Activated CD4-positive, alpha-beta T cell treated with anti-CD3 and anti-CD28 coated beads for 36 hours (primary cell): ENCODE measurements at regions of chr5 and their contacts with region 1.

Region 1: DNA sequence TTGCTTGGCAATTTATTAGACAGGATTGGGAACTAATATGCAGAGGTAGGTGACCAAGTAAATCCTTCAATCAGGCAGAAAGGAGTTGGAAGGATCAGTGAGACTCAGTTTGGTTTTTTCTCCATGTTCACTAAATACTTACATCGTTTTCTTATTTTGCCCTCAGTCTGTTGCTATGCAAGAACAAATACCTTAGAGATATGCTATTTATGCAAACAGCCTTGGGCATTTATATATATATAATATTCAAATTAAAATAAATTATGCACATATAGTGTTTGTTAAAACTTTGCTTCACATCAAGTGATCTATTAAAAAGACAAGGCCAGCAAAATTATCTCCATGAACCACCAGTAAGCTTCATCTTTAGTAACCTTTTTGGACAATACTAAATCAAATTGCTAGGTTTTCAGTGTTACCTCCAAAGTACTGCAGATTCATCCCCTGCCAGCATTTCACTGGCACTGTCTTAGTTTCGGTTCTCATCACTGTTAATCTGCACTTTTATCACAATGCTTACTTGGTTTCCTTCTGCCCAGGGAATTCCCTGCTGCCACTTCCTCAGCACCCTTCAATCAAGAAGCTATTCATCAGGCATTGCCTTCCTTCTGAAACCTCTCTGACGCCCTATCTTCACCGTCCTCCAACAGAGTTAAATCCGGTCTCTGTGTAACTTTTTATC is 26.0 kb upstream of the LIFR start:
- DNase-seq: no peak
- ATAC-seq: peak; percentile 12
- H3K4me3 Mint-ChIP-seq: no peak overlapping the region
- H3K27ac Mint-ChIP-seq: no peak overlapping the region
- H3K4me1 Mint-ChIP-seq: peaks cover 3% of the 10 kb centered on the region
- H3K27me3 Mint-ChIP-seq: peaks cover 24% of the 10 kb centered on the region

Region 2: GRCh38 chr5:37520811-37521210 is 1061.6 kb before region 1 on chr5:
- CTCF ChIA-PET with region 1: no interaction called
- POLR2A ChIA-PET with region 1: no interaction called
- intact Hi-C with region 1: no loop called
- DNase-seq: no peak
- ATAC-seq: no peak
- H3K4me3 Mint-ChIP-seq: no peak overlapping the region
- H3K27ac Mint-ChIP-seq: no peak overlapping the region
- H3K4me1 Mint-ChIP-seq: no peaks in the 10 kb centered on the region
- H3K27me3 Mint-ChIP-seq: no peaks in the 10 kb centered on the region

Region 3: GRCh38 chr5:38562444-38562843 is 20.0 kb before region 1 on chr5:
- CTCF ChIA-PET with region 1: no interaction called
- POLR2A ChIA-PET with region 1: no interaction called
- intact Hi-C with region 1: loop called in 1 of 2 experiments (anchors 1 kb)
- DNase-seq: no peak
- ATAC-seq: no peak
- H3K4me3 Mint-ChIP-seq: no peak overlapping the region
- H3K27ac Mint-ChIP-seq: no peak overlapping the region
- H3K4me1 Mint-ChIP-seq: peaks cover 3% of the 10 kb centered on the region
- H3K27me3 Mint-ChIP-seq: peaks cover 28% of the 10 kb centered on the region

Region 4: DNA sequence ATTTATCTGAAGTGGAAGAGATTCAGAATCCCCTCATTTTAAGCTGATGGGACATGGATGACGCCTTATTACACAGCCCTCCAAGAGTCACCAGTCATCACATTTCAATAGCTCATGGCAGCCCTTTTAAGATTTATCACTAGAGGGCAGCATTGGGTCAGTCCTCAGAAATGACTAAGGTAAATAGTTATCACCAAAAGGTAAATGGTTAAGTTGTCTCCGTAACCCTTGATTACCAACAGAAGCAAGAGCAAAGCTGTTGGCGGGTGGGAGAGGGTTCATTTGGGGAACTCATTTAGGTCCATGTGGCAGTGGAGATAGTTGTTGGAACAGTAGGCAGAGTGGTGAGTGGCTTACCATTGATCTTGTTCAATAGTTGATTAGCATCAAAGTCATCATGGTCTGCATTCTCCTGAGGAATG is 793.9 kb after region 1 on chr5:
- CTCF ChIA-PET with region 1: no interaction called
- POLR2A ChIA-PET with region 1: no interaction called
- intact Hi-C with region 1: no loop called
- DNase-seq: peak; percentile 51
- ATAC-seq: peak; percentile 60
- H3K4me3 Mint-ChIP-seq: no peak overlapping the region
- H3K27ac Mint-ChIP-seq: no peak overlapping the region
- H3K4me1 Mint-ChIP-seq: no peaks in the 10 kb centered on the region
- H3K27me3 Mint-ChIP-seq: peaks cover 2% of the 10 kb centered on the region